ENCODE measurements at regions of chr18 and their contacts with region 1.

Region 1: DNA sequence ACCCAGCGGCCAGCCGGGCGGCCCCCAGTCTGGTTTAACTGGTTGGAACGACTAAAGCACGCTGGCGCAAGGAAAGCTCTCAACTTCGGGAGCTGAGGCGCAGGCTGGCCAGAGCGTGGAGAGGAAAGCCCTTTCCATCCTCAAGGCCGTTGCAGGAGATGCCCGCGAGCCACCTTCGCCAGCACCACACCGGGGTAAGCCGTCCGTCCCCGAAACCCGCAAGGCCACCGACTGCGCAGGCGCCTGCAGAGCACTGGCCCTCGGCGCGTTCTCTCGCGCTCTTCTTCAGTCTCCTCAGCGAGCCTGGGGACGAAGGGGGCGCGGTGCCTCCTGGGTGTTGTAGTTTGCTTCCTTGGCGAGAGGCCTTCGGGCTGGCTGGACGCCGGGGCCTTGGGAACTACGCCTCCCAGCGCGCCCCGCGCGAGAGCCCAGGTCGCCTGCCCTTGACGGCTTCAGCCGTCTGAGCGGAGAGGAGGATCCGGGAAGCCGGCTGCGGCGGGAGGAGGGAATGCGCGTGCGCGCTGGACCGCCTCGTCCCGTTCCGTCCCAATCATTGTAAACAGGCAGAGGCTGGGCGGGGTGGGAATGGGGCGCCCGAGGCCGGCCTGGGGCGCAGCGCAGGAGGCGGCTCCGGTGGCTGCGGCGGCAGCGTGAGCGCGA is at the start of gene RALBP1:
- DNase-seq: peak; percentile 94
- ATAC-seq: peak; percentile 98
- H3K4me3 Mint-ChIP-seq: peak within 1 kb of the TSS; percentile 97
- H3K27ac Mint-ChIP-seq: peak within 1 kb of the TSS; percentile 91
- H3K4me1 Mint-ChIP-seq: peaks cover 25% of the 10 kb centered on the region
- H3K27me3 Mint-ChIP-seq: peaks cover 8% of the 10 kb centered on the region
- CTCF ChIP-seq: no peak
- total RNA-seq, gene RALBP1: 31.9 and 32.7 TPM in 2 replicates

Region 2: DNA sequence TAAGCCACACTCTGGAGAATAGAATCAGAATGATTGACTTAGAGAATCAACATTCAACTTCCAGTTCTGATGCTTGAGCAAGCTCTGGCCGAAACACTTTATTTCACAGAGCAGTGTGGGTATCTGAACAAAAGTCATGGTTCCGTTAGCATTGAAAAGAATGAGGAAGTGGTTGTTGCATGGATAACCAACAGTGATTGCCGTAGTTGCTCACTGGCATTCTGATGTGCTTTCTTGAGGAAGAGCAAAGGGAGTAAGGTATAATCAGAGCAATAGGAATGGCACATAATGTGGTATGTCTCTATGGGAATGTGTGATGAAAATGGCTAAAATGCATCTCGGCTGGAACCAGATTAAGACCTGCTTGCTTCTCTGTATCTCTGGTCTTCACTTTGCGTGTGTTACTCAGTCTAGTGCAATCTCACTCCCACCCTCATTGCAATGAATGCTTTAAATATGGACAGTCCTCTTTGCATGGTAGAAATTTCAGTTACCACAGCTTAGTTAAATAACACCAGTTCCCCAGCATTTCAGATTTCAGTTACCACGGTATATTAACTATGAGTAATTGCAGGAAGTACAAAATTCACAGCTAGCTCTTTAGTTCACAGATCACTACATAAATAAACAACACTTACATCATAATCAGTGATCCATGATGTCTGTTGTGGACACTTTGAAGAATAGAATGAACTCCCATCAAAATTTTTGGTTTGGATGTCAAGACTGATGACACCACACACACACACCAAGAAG is 873.7 kb before region 1 on chr18:
- CTCF ChIA-PET with region 1: no interaction called
- POLR2A ChIA-PET with region 1: no interaction called
- intact Hi-C with region 1: loop called (anchors 2 kb)
- DNase-seq: no peak
- ATAC-seq: peak; percentile 75
- H3K4me3 Mint-ChIP-seq: peak overlapping the region; percentile 40
- H3K27ac Mint-ChIP-seq: peak overlapping the region; percentile 87
- H3K4me1 Mint-ChIP-seq: peaks cover 57% of the 10 kb centered on the region
- H3K27me3 Mint-ChIP-seq: no peaks in the 10 kb centered on the region
- CTCF ChIP-seq: no peak

Region 3: DNA sequence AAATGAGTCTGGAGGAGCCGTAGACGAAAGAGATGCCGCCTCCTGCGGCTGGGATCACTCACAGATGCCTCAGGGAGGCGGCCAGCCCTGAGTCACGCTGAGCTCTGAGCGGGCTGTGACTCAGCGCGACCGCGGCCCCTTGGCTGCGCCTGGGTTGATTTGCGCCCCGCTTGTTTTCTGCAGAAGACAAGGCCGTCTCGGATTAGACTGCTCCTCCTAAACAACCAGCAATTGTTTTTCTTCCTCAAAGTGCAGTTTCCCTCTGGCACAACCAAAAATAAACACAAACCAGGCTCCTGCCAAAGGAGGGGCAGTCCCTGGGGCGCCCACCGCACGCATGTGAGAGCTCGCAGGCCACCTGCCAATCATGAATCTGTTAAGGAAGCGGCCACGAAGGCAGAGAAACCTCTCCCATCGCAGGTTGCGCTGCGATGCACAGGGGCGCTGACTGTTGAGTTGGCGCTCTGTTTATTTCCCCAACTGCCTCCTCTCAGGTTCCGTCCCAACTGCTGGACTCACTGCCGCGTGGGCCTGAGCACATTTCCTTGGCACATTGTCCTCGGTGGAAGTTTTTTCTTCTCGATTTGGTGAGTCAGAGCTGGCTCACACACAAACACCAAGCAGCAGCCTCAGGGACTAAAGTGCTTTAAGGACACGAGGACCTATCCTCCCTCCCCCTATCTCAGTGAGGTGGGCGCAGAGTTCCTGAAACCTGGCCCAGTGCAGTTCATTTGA is 457.8 kb before region 1 on chr18:
- CTCF ChIA-PET with region 1: no interaction called
- POLR2A ChIA-PET with region 1: no interaction called
- intact Hi-C with region 1: loop called (anchors 2 kb)
- DNase-seq: peak; percentile 50
- ATAC-seq: peak; percentile 93
- H3K4me3 Mint-ChIP-seq: peak overlapping the region; percentile 82
- H3K27ac Mint-ChIP-seq: peak overlapping the region; percentile 50
- H3K4me1 Mint-ChIP-seq: peaks cover 11% of the 10 kb centered on the region
- H3K27me3 Mint-ChIP-seq: no peaks in the 10 kb centered on the region
- CTCF ChIP-seq: no peak

Region 4: GRCh38 chr18:9334329-9334972 is 140.7 kb before region 1 on chr18 and contains the start of gene TWSG1:
- CTCF ChIA-PET with region 1: no interaction called
- POLR2A ChIA-PET with region 1: interaction called, 6 read pairs
- intact Hi-C with region 1: loop called (anchors 1 kb)
- DNase-seq: peak; percentile 86
- ATAC-seq: peak; percentile 94
- H3K4me3 Mint-ChIP-seq: peak within 1 kb of the TSS; percentile 89
- H3K27ac Mint-ChIP-seq: peak within 1 kb of the TSS; percentile 60
- H3K4me1 Mint-ChIP-seq: peaks cover 20% of the 10 kb centered on the region
- H3K27me3 Mint-ChIP-seq: no peaks in the 10 kb centered on the region
- CTCF ChIP-seq: no peak
- total RNA-seq, gene TWSG1: 4.1 and 4.8 TPM in 2 replicates

Region 5: DNA sequence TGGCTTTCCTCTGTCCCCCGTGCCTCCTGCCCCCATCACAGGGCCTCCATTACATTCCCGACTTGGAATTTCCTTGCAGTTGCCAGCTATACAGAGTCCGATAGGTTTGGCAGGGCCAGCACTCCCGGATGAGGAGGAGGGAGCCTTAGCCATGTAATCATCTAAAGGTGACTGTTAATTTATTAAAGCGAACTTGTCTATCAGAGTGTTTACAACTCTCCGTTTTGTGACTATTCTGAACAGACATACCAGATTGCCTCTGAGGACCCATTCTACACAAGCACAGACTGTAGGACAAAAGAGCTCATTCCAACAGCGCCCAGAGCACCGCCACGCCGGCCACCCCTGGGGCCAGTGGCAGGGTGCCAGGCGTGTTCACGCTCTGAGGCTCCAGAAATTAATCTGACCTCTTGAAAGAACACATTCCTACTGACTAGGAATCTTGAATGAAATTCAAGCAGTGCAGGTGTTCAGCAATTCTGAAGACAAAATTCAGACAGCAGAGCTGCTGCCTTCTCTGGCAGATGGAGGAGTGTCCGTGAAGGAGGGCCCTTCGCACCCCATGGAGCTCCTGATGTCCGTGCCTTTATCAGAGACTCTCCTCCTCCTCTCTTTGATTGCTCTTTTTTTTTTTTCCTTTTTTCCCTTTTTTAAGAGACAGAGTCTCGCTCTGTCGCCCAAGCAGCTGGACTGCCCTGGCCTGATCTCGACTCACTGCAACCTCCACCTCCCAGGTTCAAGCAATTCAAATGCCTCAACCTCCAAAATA is 57.9 kb before region 1 on chr18:
- CTCF ChIA-PET with region 1: no interaction called
- POLR2A ChIA-PET with region 1: no interaction called
- intact Hi-C with region 1: no loop called
- DNase-seq: no peak
- ATAC-seq: no peak
- H3K4me3 Mint-ChIP-seq: no peak overlapping the region
- H3K27ac Mint-ChIP-seq: no peak overlapping the region
- H3K4me1 Mint-ChIP-seq: peaks cover 4% of the 10 kb centered on the region
- H3K27me3 Mint-ChIP-seq: no peaks in the 10 kb centered on the region
- CTCF ChIP-seq: no peak

Region 6: GRCh38 chr18:9454061-9454703 is 20.9 kb before region 1 on chr18:
- CTCF ChIA-PET with region 1: no interaction called
- POLR2A ChIA-PET with region 1: no interaction called
- intact Hi-C with region 1: no loop called
- DNase-seq: no peak
- ATAC-seq: no peak
- H3K4me3 Mint-ChIP-seq: no peak overlapping the region
- H3K27ac Mint-ChIP-seq: no peak overlapping the region
- H3K4me1 Mint-ChIP-seq: no peaks in the 10 kb centered on the region
- H3K27me3 Mint-ChIP-seq: peaks cover 1% of the 10 kb centered on the region
- CTCF ChIP-seq: no peak

Region 7: DNA sequence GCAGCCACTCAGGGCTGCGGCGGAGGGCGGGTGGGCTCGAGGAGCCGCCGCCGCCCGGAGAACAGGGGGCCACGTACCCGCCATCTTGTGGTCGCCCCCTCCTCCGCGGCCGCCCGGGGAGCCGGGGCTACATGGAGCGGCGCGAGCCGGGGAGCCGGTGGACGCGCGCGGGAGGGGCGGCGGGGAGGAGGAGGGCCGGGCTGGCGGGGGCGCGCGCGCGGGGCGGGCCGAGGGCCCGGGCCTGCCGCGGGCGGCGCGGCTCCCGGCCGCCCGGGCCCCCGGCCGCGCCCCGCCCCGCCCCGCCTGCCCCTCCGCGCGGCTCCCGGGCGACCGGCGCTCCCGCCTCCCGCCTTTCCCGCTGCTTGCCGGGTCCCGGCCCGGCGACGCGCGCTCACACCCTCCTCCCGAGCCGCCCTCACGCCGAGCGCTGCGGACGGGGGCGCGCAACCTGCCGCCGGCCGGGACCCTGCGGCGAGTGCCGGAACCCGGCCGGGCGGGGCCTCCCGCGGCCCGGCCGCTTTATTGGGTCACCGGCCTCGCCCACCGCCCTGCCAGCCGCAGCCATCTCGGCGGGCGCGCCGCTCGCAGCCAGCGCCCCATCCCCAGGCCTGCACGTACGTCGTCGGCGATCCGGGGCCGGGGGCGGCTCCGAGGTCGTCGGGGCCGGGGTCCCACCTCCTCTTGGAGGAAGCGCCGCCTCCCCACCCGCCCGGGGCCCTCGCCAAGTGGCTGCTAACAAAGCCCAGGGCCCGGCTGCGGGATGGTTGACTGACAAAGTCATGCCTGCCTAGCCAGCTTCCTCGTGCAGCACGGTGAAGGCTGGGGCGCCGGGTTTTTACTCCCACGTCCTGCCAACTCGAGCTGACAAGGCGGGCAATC is 139.5 kb after region 1 on chr18 and contains the start of gene PPP4R1:
- CTCF ChIA-PET with region 1: no interaction called
- POLR2A ChIA-PET with region 1: no interaction called
- intact Hi-C with region 1: loop called (anchors 2 kb)
- DNase-seq: peak; percentile 74
- ATAC-seq: peak; percentile 68
- H3K4me3 Mint-ChIP-seq: peak within 1 kb of the TSS; percentile 86
- H3K27ac Mint-ChIP-seq: peak within 1 kb of the TSS; percentile 90
- H3K4me1 Mint-ChIP-seq: peaks cover 26% of the 10 kb centered on the region
- H3K27me3 Mint-ChIP-seq: no peaks in the 10 kb centered on the region
- CTCF ChIP-seq: no peak
- total RNA-seq, gene PPP4R1: 48.1 and 51.3 TPM in 2 replicates

Region 8: DNA sequence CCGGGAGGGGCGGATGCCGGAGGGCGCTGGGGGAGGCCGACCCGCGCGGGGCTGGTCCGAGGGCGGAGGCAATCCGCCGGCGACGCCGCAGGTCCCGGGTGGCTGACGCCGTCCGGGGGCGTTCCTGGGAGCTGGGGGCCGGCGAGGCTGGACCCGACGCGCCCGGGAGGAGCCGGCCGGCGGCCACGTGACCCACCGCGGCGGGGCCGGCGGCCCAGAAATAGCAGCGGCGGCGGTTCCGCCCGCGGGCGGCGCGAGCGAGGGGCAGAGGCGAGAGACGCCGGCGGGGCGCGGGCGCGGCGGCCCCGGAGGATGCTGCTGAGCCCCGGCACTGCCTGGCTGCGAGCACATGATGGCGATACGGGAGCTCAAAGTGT is 232.9 kb after region 1 on chr18 and contains the start of gene RAB31:
- CTCF ChIA-PET with region 1: no interaction called
- POLR2A ChIA-PET with region 1: no interaction called
- intact Hi-C with region 1: loop called (anchors 1 kb)
- DNase-seq: peak; percentile 61
- ATAC-seq: peak; percentile 47
- H3K4me3 Mint-ChIP-seq: peak within 1 kb of the TSS; percentile 96
- H3K27ac Mint-ChIP-seq: peak within 1 kb of the TSS; percentile 95
- H3K4me1 Mint-ChIP-seq: peaks cover 54% of the 10 kb centered on the region
- H3K27me3 Mint-ChIP-seq: peaks cover 2% of the 10 kb centered on the region
- CTCF ChIP-seq: no peak
- total RNA-seq, gene RAB31: 33.0 and 36.0 TPM in 2 replicates